Caco-2 (cell line): ENCODE measurements at regions of chr3 and their contacts with region 1.

Region 1: DNA sequence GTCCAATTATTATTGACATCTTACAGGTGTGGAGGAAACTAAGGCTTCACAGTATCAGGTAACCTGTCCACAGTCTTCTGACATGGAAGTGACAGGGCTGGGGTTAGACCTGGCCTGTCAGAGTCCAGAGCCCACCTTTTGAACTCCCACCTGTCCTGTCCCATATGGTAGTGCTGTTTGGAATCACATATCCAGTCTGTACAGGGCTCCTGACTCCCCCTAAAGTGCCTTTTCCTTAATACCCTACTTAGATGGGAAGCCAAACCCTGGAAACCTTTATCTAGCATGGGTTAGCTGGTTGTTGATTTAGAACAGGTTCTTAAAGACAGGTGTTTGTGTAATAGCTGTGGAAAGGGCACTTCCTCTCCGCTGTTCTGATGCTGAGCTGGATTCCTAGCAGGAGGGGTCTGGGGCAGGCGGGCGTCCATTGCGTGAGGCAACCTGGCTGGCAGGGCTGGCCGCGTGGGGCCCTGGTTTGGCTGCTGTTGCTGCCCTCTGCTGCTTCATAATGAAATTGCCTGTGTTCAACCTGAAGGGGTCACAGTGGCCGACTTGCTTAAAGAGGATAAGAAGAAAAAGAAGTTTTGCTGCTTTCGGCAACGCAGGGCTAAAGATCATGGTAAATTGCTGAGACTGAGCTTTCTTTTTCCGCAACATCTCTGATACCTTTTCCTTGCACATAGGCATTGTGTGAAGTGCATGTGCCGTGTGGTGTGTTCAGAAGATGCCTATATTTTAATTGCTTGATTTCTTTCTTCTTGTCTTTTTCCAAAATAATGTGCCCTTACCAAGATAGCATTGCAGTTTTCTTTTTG is 136.2 kb downstream of the CHDH start:
- DNase-seq: peak; percentile 69 to 83
- H3K4me3 ChIP-seq: no peak overlapping the region
- H3K4me3 Mint-ChIP-seq: no peak overlapping the region
- H3K27ac Mint-ChIP-seq: no peak overlapping the region
- H3K4me1 ChIP-seq: no peaks in the 10 kb centered on the region
- H3K4me1 Mint-ChIP-seq: no peaks in the 10 kb centered on the region
- H3K27me3 ChIP-seq: no peaks in the 10 kb centered on the region
- H3K27me3 Mint-ChIP-seq: no peaks in the 10 kb centered on the region
- CTCF ChIP-seq: peak; percentile 80 to 81

Region 2: DNA sequence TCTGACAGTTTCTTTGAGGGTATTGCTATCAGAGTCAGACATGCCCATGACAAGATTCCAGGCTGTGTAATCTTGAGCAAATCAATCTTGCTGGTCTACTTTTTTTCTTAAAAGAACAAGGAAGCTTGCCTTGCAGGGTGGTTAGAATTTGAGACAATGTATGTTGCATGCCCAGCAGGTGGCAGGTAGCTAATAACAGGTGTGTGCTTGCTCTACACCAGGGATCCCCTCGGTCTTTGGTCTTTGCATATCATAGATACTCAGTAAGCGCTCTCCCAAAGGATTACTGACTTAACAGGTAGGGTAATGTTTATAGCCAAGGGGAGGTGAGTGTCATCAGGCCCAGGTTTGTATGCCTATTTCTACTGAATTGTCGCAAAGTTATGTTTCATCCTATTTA is 178.3 kb before region 1 on chr3:
- CTCF ChIA-PET with region 1: no interaction called
- POLR2A ChIA-PET with region 1: no interaction called
- intact Hi-C with region 1: loop called (anchors 1 kb)
- DNase-seq: peak; percentile 20 to 39
- H3K4me3 ChIP-seq: no peak overlapping the region
- H3K4me3 Mint-ChIP-seq: no peak overlapping the region
- H3K27ac Mint-ChIP-seq: no peak overlapping the region
- H3K4me1 ChIP-seq: 0 out of 2 replicates have a peak, but pooled peaks cover 4% of the 10 kb centered on the region
- H3K4me1 Mint-ChIP-seq: no peaks in the 10 kb centered on the region
- H3K27me3 ChIP-seq: no peaks in the 10 kb centered on the region
- H3K27me3 Mint-ChIP-seq: no peaks in the 10 kb centered on the region
- CTCF ChIP-seq: peak; percentile 11 to 37

Region 3: DNA sequence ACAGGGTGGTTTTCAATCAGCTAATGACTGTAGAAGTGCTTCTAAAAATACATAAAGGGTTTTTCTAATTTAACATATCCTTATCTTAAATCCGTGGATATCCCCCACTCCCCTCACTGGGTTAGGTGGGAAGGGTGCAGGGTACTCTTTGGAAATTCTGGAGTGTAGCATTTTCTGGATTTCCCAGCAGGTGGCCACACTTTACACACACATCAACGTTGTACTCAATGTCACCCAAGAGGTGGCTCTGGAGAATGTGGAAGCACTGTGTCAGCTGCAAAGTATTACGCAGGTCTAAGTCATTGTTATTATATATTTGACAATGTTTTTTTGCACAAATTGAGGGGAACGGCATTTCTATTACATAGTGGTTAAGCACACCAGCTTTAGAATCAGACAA is 32.7 kb before region 1 on chr3:
- CTCF ChIA-PET with region 1: interaction called, 4 read pairs
- POLR2A ChIA-PET with region 1: interaction called, 4 read pairs
- intact Hi-C with region 1: loop called (anchors 1 kb)
- DNase-seq: peak in 1 of 2 experiments; percentile 39
- H3K4me3 ChIP-seq: no peak overlapping the region
- H3K4me3 Mint-ChIP-seq: no peak overlapping the region
- H3K27ac Mint-ChIP-seq: no peak overlapping the region
- H3K4me1 ChIP-seq: no peaks in the 10 kb centered on the region
- H3K4me1 Mint-ChIP-seq: no peaks in the 10 kb centered on the region
- H3K27me3 ChIP-seq: no peaks in the 10 kb centered on the region
- H3K27me3 Mint-ChIP-seq: no peaks in the 10 kb centered on the region
- CTCF ChIP-seq: peak; percentile 54 to 62

Region 4: GRCh38 chr3:53696401-53697150 is 13.5 kb before region 1 on chr3:
- CTCF ChIA-PET with region 1: interaction called, 11 read pairs
- POLR2A ChIA-PET with region 1: no interaction called
- intact Hi-C with region 1: no loop called
- DNase-seq: peak in 1 of 2 experiments; percentile 16
- H3K4me3 ChIP-seq: no peak overlapping the region
- H3K4me3 Mint-ChIP-seq: no peak overlapping the region
- H3K27ac Mint-ChIP-seq: no peak overlapping the region
- H3K4me1 ChIP-seq: no peaks in the 10 kb centered on the region
- H3K4me1 Mint-ChIP-seq: peaks cover 6% of the 10 kb centered on the region
- H3K27me3 ChIP-seq: no peaks in the 10 kb centered on the region
- H3K27me3 Mint-ChIP-seq: no peaks in the 10 kb centered on the region
- CTCF ChIP-seq: peak in 1 of 2 experiments; percentile 27

Region 5: DNA sequence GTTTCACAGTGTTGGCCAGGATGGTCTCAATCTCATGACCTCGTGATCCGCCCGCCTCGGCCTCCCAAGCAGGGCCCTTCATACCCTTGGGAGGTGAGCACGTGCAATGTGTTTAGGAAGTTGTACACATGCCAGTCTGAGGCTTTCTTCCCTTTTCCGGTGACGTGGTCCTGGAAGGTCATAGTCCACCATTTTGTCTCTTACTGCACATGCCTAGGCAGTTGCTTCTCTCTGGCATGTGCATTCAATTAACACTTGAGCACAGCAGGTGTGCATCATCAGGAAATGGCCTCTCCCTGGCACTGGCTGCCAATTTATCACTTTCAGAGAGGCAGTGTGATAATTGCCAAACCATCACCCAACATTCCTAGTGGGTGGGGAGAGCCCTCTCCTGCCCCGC is 203.3 kb after region 1 on chr3:
- CTCF ChIA-PET with region 1: no interaction called
- POLR2A ChIA-PET with region 1: no interaction called
- intact Hi-C with region 1: no loop called
- DNase-seq: no peak
- H3K4me3 ChIP-seq: no peak overlapping the region
- H3K4me3 Mint-ChIP-seq: no peak overlapping the region
- H3K27ac Mint-ChIP-seq: no peak overlapping the region
- H3K4me1 ChIP-seq: no peaks in the 10 kb centered on the region
- H3K4me1 Mint-ChIP-seq: no peaks in the 10 kb centered on the region
- H3K27me3 ChIP-seq: no peaks in the 10 kb centered on the region
- H3K27me3 Mint-ChIP-seq: peaks cover 13% of the 10 kb centered on the region
- CTCF ChIP-seq: no peak

Region 6: GRCh38 chr3:54008104-54008503 is 298.0 kb after region 1 on chr3:
- CTCF ChIA-PET with region 1: no interaction called
- POLR2A ChIA-PET with region 1: no interaction called
- intact Hi-C with region 1: no loop called
- DNase-seq: no peak
- H3K4me3 ChIP-seq: no peak overlapping the region
- H3K4me3 Mint-ChIP-seq: no peak overlapping the region
- H3K27ac Mint-ChIP-seq: no peak overlapping the region
- H3K4me1 ChIP-seq: no peaks in the 10 kb centered on the region
- H3K4me1 Mint-ChIP-seq: no peaks in the 10 kb centered on the region
- H3K27me3 ChIP-seq: no peaks in the 10 kb centered on the region
- H3K27me3 Mint-ChIP-seq: no peaks in the 10 kb centered on the region
- CTCF ChIP-seq: no peak